ENCODE measurements at regions of chr2 and their contacts with region 1.

Region 1: DNA sequence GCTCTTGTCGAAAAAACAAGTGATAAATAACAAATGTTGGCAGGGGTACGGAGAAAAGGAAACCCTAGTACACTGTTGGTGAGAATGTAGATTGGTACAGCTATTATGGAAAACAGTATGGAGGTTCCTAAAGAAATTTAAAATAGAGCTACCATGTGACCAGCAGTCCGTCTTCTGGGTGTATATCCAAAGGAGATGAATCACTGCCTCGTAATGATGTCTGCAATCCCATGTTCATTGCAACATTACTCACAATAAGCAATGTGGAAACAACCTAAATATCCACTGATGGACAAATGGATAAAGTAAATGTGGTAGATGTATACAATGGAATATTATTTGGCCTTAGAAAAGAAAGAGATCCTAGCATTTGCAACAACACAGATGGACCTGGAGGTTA is 50.6 kb downstream of the SLC16A14 start:
- DNase-seq: no peak
- H3K4me3 ChIP-seq: no peak overlapping the region
- H3K27ac ChIP-seq: no peak overlapping the region
- H3K4me1 ChIP-seq: no peaks in the 10 kb centered on the region
- H3K27me3 ChIP-seq: no peaks in the 10 kb centered on the region
- CTCF ChIP-seq: no peak
- EP300 ChIP-seq: no peak
- POLR2A ChIP-seq: no peak

Region 2: GRCh38 chr2:229748950-229749349 is 269.2 kb before region 1 on chr2:
- intact Hi-C with region 1: no loop called
- DNase-seq: no peak
- H3K4me3 ChIP-seq: no peak overlapping the region
- H3K27ac ChIP-seq: no peak overlapping the region
- H3K4me1 ChIP-seq: no peaks in the 10 kb centered on the region
- H3K27me3 ChIP-seq: no peaks in the 10 kb centered on the region
- CTCF ChIP-seq: no peak
- EP300 ChIP-seq: no peak
- POLR2A ChIP-seq: no peak

Region 3: DNA sequence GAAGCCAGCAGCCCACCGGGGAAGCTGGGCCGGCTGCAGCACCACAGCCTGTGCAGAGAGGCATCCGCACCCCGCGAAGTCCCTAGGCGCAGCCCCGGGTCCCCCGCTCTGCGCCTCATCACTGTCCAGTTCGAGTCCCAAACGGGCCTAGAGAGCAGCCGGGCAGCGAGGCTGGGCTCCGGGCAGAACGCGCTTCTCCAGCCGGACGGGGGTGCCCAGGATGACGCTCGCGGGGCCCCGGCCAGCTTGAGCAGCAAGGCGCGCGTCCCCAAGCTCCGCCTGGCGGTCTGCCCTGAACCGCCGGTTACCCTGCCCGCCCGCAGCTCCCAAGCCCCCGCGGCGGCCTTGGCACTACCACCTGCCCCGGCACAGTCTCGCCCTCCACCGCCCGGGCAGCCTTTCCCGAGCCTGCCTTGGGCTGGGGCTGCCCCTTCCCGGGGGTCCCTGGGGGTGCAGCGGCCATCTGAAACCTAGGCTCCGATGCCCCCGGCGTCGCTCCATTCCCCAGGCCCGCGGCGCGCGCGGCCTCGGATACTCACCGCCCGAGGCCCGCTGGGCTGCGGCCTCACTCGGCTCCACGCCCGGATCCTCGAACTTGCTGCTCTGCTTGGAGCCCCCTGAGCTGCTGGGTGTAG is 50.0 kb after region 1 on chr2:
- intact Hi-C with region 1: loop called in 1 of 4 experiments (anchors 10 kb)
- DNase-seq: peak; percentile 58 to 79 (median 75)
- H3K4me3 ChIP-seq: peak overlapping the region; percentile 65
- H3K27ac ChIP-seq: peak overlapping the region; percentile 47 to 92
- H3K4me1 ChIP-seq: no peaks in the 10 kb centered on the region
- H3K27me3 ChIP-seq: no peaks in the 10 kb centered on the region
- CTCF ChIP-seq: peak in 1 of 3 donors; percentile 31
- EP300 ChIP-seq: no peak
- POLR2A ChIP-seq: no peak